ENCODE measurements at regions of chr2 and their contacts with region 1.

Region 1: GRCh38 chr2:168118733-168119514 is 128.5 kb downstream of the STK39 start:
- DNase-seq: no peak
- CTCF ChIP-seq: peak; percentile 67

Region 2: DNA sequence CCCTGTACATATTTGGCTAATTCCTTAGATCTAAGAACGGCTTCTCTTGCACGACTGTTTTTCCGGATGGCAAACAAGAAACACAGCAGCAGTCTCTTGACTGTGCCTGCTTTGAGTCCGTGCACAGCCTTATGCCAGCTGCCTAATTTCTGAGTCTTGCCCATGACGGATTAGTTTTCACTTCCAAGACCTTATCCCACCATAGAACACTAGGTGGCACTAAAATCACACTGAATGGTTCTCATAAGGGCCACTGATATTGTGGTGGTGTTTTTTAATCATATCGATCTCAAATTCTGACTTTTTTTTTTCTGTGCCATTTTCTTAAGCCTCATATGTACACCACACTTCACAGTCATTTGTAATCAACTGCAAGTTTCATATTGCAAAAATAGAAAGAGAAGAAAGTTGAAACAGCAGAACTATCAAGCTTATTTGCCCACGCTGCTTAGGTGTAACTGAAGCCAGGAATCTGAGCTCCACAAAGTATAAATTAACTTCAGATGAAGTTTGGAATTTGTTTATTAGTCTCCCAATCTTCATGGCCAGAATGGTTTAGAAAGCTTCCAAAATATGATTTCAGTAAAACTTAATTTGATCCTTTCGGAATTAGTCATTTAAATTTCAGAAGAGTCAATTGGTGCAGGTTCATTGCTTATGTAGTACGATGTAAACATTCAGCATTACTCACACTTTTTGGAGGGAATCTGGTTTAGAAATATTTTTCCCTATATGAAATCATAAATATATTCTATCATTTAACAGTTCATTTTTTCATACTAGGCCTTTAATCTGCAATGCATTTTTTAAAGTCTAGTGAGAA is 1579.4 kb before region 1 on chr2:
- CTCF ChIA-PET with region 1: interaction called, 96 read pairs
- POLR2A ChIA-PET with region 1: no interaction called
- DNase-seq: peak; percentile 18
- CTCF ChIP-seq: peak; percentile 65

Region 3: GRCh38 chr2:167964650-167965413 is 154.1 kb before region 1 on chr2:
- CTCF ChIA-PET with region 1: interaction called, 37 read pairs
- POLR2A ChIA-PET with region 1: no interaction called
- DNase-seq: no peak
- CTCF ChIP-seq: no peak

Region 4: DNA sequence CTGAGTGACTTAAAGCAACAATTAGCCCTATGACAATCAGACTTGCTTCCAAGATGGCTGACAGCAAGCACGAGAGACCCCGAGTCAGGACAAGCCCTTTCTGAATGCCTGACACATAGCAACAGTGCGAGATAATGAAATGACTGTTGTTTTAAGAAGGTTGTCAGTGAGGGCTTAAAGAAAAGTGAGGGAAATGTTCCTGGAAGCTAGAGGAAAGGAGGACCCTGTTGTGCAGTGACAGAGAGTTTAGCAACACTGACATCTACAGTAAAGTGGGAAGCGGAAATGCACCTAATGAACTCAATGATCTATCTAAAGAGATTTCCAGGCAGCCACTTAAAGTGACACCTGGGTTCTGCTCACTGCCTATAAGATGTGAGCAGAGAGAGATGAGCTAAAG is 34.6 kb before region 1 on chr2:
- CTCF ChIA-PET with region 1: interaction called, 15 read pairs
- POLR2A ChIA-PET with region 1: no interaction called
- DNase-seq: no peak
- CTCF ChIP-seq: no peak

Region 5: GRCh38 chr2:168090366-168091135 is 28.4 kb before region 1 on chr2:
- CTCF ChIA-PET with region 1: interaction called, 22 read pairs
- POLR2A ChIA-PET with region 1: no interaction called
- DNase-seq: peak; percentile 38
- CTCF ChIP-seq: no peak

Region 6: GRCh38 chr2:168107322-168107721 is 11.6 kb before region 1 on chr2:
- CTCF ChIA-PET with region 1: interaction called, 111 read pairs
- POLR2A ChIA-PET with region 1: no interaction called
- DNase-seq: no peak
- CTCF ChIP-seq: no peak

Region 7: DNA sequence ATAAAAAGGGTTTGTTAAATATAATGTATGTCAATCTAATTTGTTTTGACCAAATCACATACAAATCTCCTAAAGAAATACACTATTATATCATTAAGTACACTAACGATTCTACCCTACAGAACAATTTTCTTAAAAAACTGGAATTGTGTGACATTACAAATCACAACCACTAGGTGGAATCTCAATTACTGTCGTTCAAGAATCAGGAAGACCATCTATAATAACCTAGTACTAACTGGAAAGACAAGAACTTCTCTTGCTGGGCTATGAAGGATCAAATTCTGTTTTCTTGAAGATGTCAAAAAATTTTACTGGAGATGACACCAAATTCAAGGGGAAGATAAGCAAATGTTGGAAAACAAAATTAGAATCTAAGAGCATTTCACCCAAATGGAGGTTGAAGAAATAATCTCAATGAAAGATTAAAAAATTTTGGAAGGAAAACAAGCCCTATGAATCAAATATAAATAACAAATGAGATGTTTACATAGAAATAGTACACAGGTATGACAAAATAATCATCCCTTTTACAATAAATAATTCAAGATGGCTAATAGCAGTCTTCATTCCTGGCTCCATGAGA is 17.6 kb after region 1 on chr2:
- CTCF ChIA-PET with region 1: interaction called, 99 read pairs
- POLR2A ChIA-PET with region 1: no interaction called
- DNase-seq: peak; percentile 16
- CTCF ChIP-seq: peak; percentile 28

Measured in GM10248 (cell line).